ENCODE measurements at regions of chr4 and their contacts with region 1.

Region 1: DNA sequence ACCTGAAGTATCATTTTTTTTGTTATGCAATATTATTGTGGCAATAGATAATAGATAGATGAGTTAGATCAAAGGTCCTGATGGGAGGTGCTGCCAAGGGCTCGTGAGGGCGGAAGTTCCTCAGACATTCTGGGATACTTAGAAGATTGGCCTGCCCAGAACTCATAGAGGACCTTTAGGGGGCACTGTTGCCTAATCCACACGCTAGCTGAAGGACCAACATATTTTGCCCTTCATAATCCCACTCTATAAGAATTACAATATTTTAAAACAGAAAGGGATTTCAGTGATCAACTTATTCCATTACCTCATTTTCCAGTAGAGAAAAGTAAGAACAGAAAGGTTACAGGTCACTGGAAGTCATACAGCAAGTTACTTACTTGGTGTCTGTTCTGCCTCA is 22.9 kb upstream of the COX7B2 start:
- DNase-seq: peak in 1 of 2 donors; percentile 32
- ATAC-seq: peak in 6 of 8 donors; percentile 69 to 85 (median 78)
- H3K4me3 ChIP-seq: no peak overlapping the region
- H3K27ac ChIP-seq: peak overlapping the region in 2 of 10 donors; percentile 10 to 22
- H3K4me1 ChIP-seq: peaks cover 0 to 12% (median 0%) of the 10 kb centered on the region in 9 donors
- H3K27me3 ChIP-seq: no peaks in the 10 kb centered on the region
- CTCF ChIP-seq: peak; percentile 22 to 70 (median 54)

Region 2: GRCh38 chr4:45987858-45988257 is 944.1 kb before region 1 on chr4:
- intact Hi-C with region 1: no loop called
- DNase-seq: no peak
- ATAC-seq: no peak
- H3K4me3 ChIP-seq: no peak overlapping the region
- H3K27ac ChIP-seq: no peak overlapping the region
- H3K4me1 ChIP-seq: no peaks in the 10 kb centered on the region
- H3K27me3 ChIP-seq: no peaks in the 10 kb centered on the region
- CTCF ChIP-seq: no peak

Region 3: GRCh38 chr4:46586566-46586965 is 345.4 kb before region 1 on chr4:
- intact Hi-C with region 1: no loop called
- DNase-seq: no peak
- ATAC-seq: no peak
- H3K4me3 ChIP-seq: no peak overlapping the region
- H3K27ac ChIP-seq: no peak overlapping the region
- H3K4me1 ChIP-seq: no peaks in the 10 kb centered on the region
- H3K27me3 ChIP-seq: no peaks in the 10 kb centered on the region
- CTCF ChIP-seq: no peak

Region 4: GRCh38 chr4:46793036-46793435 is 138.9 kb before region 1 on chr4:
- intact Hi-C with region 1: no loop called
- DNase-seq: no peak
- ATAC-seq: no peak
- H3K4me3 ChIP-seq: no peak overlapping the region
- H3K27ac ChIP-seq: no peak overlapping the region
- H3K4me1 ChIP-seq: no peaks in the 10 kb centered on the region
- H3K27me3 ChIP-seq: no peaks in the 10 kb centered on the region
- CTCF ChIP-seq: no peak

Region 5: GRCh38 chr4:47002593-47002992 is 70.6 kb after region 1 on chr4:
- intact Hi-C with region 1: loop called in 5 of 10 experiments (anchors 2 to 10 kb)
- DNase-seq: no peak
- ATAC-seq: peak in 3 of 8 donors; percentile 55 to 65 (median 58)
- H3K4me3 ChIP-seq: no peak overlapping the region
- H3K27ac ChIP-seq: no peak overlapping the region
- H3K4me1 ChIP-seq: peaks cover 0 to 9% (median 0%) of the 10 kb centered on the region in 9 donors
- H3K27me3 ChIP-seq: no peaks in the 10 kb centered on the region
- CTCF ChIP-seq: peak in 8 of 9 donors; percentile 5 to 59 (median 44)

Region 6: GRCh38 chr4:47032415-47033106 is 100.6 kb after region 1 on chr4:
- intact Hi-C with region 1: loop called in 4 of 10 experiments (anchors 1 to 10 kb)
- DNase-seq: peak; percentile 59 to 60
- ATAC-seq: peak; percentile 83 to 98 (median 96)
- H3K4me3 ChIP-seq: peak overlapping the region; percentile 9 to 60 (median 53)
- H3K27ac ChIP-seq: peak overlapping the region in 6 of 10 donors; percentile 5 to 80 (median 75)
- H3K4me1 ChIP-seq: peaks cover 0 to 15% (median 0%) of the 10 kb centered on the region in 9 donors
- H3K27me3 ChIP-seq: peaks cover 0 to 59% (median 15%) of the 10 kb centered on the region in 7 donors
- CTCF ChIP-seq: peak; percentile 39 to 77 (median 71)

Region 7: DNA sequence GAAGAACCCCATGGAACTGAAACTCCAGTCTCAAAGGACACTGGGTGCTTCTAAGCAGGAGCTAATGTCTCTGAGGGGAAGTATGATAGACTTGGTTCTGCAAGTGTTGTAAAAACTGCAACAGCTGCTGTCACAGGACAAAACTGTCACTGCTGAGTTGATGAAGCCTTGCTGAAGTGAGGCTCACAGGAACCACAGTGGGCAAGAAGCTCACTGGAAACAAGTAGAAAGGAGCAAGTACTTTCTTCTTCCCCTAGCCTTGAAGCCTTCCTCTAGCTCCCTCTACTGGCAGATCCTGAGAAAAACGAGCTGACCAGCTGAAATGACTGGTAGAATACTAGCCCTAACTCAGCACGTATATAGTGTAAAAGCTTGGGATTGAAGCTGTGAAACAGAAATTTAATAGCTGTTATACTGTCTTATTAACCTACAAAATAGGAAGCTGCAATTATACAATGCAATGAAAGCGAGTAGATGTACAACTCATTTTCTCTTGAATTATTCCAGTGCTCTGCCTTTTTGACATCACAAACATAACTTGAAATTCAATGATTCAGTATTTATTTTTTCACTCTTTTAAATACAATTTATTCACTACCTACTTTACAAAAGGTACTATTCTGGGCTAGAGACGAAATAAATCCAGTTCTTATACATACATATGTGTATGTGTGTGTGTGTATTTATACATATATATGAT is 190.8 kb after region 1 on chr4:
- intact Hi-C with region 1: loop called in 2 of 10 experiments (anchors 10 kb)
- DNase-seq: peak in 1 of 2 donors; percentile 48
- ATAC-seq: peak in 5 of 8 donors; percentile 20 to 74 (median 64)
- H3K4me3 ChIP-seq: no peak overlapping the region
- H3K27ac ChIP-seq: no peak overlapping the region
- H3K4me1 ChIP-seq: peaks cover 0 to 4% (median 0%) of the 10 kb centered on the region in 9 donors
- H3K27me3 ChIP-seq: no peaks in the 10 kb centered on the region
- CTCF ChIP-seq: peak; percentile 47 to 84 (median 74)